ENCODE measurements at regions of chr15 and their contacts with region 1.

Region 1: DNA sequence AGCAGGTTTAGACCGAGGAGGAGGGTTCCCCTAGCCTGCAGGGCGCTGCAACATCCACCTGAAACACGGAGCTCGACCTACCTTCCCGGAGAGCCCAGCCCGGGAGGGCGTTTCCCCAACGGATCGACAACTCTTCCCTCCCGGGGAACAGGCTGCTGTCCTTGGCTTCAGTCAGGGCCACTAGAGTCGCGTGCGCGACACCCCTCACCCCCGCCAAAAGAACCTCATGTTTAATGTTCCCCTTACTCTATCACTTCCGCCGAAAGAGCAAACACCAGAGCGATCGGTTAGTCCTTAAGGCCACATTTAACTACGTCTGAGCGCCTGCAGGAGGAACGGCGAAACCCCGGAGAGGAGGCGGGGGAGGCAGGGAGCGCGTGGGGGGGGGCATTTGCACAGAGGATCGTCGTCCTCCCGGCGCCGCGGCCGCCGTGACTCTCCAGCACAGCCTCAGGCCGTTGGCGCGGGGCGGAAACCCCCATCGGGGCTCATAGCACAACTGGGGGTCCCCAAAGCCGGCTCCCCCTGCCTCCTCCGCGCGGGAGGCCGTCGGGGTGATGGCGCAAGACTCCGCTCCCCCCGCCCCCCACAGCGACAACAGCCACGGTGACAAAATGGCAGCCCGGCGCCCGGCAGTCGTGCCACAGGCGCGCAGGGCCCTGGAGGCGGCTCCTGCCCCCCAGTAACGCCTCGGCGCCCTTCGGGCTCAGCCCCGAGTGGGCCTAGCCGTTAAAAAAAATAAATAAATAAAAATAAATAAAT is 3.2 kb downstream of the ANP32A start:
- DNase-seq: peak; percentile 71
- H3K4me3 ChIP-seq: peak overlapping the region; percentile 88 to 96
- H3K27ac ChIP-seq: peak overlapping the region; percentile 99 to 100
- H3K4me1 ChIP-seq: peaks cover 18% of the 10 kb centered on the region
- H3K27me3 ChIP-seq: no peaks in the 10 kb centered on the region
- CTCF ChIP-seq: peak in 1 of 4 experiments; percentile 25
- POLR2A ChIP-seq: peak; percentile 12

Region 2: GRCh38 chr15:68277603-68278344 is 539.7 kb before region 1 on chr15 and contains the start of gene FEM1B:
- intact Hi-C with region 1: loop called (anchors 5 kb)
- DNase-seq: peak; percentile 88
- H3K4me3 ChIP-seq: peak within 1 kb of the TSS; percentile 85 to 95
- H3K27ac ChIP-seq: peak within 1 kb of the TSS; percentile 97 to 98
- H3K4me1 ChIP-seq: peaks cover 3% of the 10 kb centered on the region
- H3K27me3 ChIP-seq: no peaks in the 10 kb centered on the region
- CTCF ChIP-seq: peak in 1 of 4 experiments; percentile 19
- POLR2A ChIP-seq: peak; percentile 47
- total RNA-seq, gene FEM1B: 46.0 to 50.0 TPM

Region 3: DNA sequence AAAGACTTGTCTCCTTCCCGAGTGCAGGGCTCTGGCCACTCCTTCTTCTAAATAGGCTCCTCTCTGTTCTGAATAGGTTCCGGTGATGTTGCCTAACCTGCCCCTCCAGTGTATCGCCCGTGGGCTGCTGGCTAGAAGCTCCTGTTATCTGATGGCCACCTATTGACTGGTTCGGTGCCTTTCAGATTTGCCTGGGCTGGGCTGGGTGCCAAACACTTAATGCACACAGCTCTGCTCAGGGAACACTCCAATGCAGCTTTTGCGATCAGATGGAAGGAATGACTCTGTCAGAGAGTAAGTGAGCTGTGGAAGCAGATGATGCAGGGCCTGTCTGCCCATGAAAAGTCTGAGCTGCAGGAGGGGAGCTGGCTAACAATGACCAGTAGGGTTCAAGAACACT is 125.8 kb before region 1 on chr15:
- intact Hi-C with region 1: no loop called
- DNase-seq: peak; percentile 32
- H3K4me3 ChIP-seq: no peak overlapping the region
- H3K27ac ChIP-seq: no peak overlapping the region
- H3K4me1 ChIP-seq: no peaks in the 10 kb centered on the region
- H3K27me3 ChIP-seq: no peaks in the 10 kb centered on the region
- CTCF ChIP-seq: no peak
- POLR2A ChIP-seq: no peak

Region 4: DNA sequence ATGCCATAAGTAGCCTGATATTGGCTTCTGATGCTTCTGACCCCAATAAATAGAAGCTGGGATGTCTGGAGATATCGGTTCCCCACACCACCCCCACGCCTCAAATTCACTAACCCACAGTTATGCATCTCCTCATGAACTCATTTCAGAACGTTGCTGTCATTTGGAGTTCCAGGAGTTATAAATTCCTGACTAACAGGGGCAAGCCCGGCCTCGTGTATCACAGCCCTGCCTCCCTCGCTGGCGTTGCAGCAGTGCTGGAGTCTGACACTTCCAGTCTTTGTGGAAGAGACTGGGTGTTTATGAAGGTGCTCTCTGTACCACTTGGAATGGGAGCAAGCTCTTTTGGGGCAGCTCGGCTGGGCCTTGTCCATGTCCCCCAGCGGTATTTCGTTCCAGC is 97.8 kb before region 1 on chr15:
- intact Hi-C with region 1: no loop called
- DNase-seq: peak; percentile 23
- H3K4me3 ChIP-seq: no peak overlapping the region
- H3K27ac ChIP-seq: no peak overlapping the region
- H3K4me1 ChIP-seq: no peaks in the 10 kb centered on the region
- H3K27me3 ChIP-seq: no peaks in the 10 kb centered on the region
- CTCF ChIP-seq: no peak
- POLR2A ChIP-seq: no peak

Region 5: GRCh38 chr15:68730471-68730919 is 87.0 kb before region 1 on chr15:
- intact Hi-C with region 1: loop called (anchors 5 kb)
- DNase-seq: peak; percentile 29
- H3K4me3 ChIP-seq: no peak overlapping the region
- H3K27ac ChIP-seq: peak overlapping the region in 1 of 2 donors; percentile 8
- H3K4me1 ChIP-seq: no peaks in the 10 kb centered on the region
- H3K27me3 ChIP-seq: no peaks in the 10 kb centered on the region
- CTCF ChIP-seq: peak in 3 of 4 experiments; percentile 58 to 72 (median 62)
- POLR2A ChIP-seq: no peak

Measured in prostate gland (tissue), 2 donors.